ENCODE measurements at regions of chr17 and their contacts with region 1.

Region 1: DNA sequence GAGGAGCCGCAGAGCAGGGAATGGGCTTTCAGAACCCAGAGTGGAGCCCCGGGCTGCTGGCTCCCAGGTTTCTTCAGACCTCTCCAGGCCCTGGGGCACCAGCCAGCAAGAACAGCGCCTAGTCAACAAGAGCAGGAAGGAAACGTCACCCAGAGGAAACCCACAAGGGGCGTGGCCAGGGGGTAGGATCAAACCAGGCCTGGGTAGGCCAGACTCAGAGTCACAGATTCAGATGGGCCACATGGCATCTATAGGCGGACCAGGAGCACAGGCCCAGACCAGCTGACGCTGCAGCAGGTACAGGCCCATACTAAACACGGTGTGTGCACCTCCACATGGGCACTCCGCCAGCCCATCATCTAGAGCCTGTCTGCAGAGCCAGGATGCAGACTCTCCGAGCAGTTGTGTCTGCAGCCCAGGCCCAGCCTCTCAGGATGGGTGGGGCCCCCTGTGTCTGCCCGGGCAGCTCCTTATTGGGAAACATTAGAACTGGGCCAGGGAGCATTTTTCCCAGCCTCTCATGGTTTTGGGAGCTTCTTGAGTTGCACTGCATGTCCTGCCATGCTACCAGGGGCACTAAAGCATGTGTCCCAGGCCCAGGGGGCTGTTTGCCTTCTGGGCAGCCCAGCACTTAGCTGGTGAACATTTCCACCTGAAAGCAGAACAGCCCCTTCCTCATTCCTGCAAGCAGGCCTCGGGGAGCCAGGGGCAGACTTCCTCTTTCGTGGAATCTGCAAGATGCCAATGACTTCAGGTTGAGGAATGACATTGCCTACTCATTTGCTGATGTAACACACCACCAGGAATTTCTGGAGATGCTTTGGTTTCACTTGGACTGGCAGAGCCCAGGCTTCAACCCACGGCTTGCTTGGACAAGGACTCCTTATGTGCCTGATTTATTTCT is at the start of gene NLRP1:
- DNase-seq: no peak
- H3K4me3 ChIP-seq: no peak within 1 kb of the TSS
- H3K4me3 Mint-ChIP-seq: no peak within 1 kb of the TSS
- H3K27ac Mint-ChIP-seq: no peak within 1 kb of the TSS
- H3K4me1 ChIP-seq: no peaks in the 10 kb centered on the region
- H3K4me1 Mint-ChIP-seq: no peaks in the 10 kb centered on the region
- H3K27me3 ChIP-seq: no peaks in the 10 kb centered on the region
- H3K27me3 Mint-ChIP-seq: peaks cover 3% of the 10 kb centered on the region
- CTCF ChIP-seq: no peak
- total RNA-seq, gene NLRP1: 0.09 and 0.28 TPM in 2 replicates

Region 2: DNA sequence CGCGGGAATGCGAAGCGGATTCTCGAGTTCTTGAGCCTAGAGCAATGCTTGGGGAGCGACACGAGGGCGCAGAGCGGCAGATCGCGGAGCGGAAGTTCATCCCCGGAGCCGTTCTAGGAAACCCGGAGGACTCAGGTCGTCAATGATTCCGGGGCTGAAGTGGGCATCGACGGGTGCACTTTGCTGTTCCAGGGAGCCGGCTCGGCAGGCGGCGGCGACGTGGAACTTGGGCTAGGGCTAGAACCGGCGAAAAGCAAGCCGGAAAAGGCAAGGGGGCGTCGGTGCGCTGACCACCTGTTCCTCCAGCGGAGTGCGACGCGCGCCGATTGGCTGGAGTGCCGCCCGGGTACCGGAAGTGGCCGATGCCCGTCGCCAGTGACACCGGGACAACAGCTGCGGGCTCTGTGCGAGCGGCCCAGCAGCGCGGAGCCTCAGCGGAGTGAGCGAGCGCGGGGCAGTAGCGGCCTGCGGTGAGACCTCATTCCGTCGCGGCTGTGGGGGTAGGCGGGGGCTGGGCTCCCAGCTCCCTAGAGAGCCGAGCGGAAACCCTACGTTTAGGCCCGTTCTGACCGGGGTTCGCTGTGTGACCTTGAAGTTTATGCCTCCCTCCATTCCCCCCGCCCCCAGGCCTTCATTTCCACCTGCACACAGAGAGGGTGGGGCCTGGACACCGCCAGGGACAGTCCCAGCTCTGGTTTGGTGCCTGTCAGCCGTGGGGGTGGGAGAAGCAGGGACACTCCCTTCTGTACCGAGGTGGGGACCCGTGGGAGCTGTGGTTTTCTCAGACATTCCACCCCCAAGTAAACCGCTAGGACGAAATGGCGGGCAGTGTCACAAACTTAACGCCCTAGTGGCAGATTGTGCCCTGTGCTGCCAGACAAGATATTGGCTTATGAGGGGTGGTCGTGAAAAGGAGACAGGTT is 506.3 kb before region 1 on chr17 and contains the start of gene ZFP3:
- CTCF ChIA-PET with region 1: no interaction called
- POLR2A ChIA-PET with region 1: no interaction called
- intact Hi-C with region 1: no loop called
- DNase-seq: peak; percentile 81 to 85
- H3K4me3 ChIP-seq: peak within 1 kb of the TSS; percentile 74
- H3K4me3 Mint-ChIP-seq: peak within 1 kb of the TSS; percentile 93
- H3K27ac Mint-ChIP-seq: peak within 1 kb of the TSS; percentile 95
- H3K4me1 ChIP-seq: peaks cover 11% of the 10 kb centered on the region
- H3K4me1 Mint-ChIP-seq: no peaks in the 10 kb centered on the region
- H3K27me3 ChIP-seq: no peaks in the 10 kb centered on the region
- H3K27me3 Mint-ChIP-seq: no peaks in the 10 kb centered on the region
- CTCF ChIP-seq: peak in 1 of 2 experiments; percentile 13
- total RNA-seq, gene ZFP3: 3.6 and 3.7 TPM in 2 replicates

Region 3: GRCh38 chr17:5608399-5609112 is 23.9 kb after region 1 on chr17:
- CTCF ChIA-PET with region 1: no interaction called
- POLR2A ChIA-PET with region 1: no interaction called
- intact Hi-C with region 1: no loop called
- DNase-seq: no peak
- H3K4me3 ChIP-seq: no peak overlapping the region
- H3K4me3 Mint-ChIP-seq: no peak overlapping the region
- H3K27ac Mint-ChIP-seq: no peak overlapping the region
- H3K4me1 ChIP-seq: no peaks in the 10 kb centered on the region
- H3K4me1 Mint-ChIP-seq: no peaks in the 10 kb centered on the region
- H3K27me3 ChIP-seq: no peaks in the 10 kb centered on the region
- H3K27me3 Mint-ChIP-seq: peaks cover 4% of the 10 kb centered on the region
- CTCF ChIP-seq: no peak

Region 4: DNA sequence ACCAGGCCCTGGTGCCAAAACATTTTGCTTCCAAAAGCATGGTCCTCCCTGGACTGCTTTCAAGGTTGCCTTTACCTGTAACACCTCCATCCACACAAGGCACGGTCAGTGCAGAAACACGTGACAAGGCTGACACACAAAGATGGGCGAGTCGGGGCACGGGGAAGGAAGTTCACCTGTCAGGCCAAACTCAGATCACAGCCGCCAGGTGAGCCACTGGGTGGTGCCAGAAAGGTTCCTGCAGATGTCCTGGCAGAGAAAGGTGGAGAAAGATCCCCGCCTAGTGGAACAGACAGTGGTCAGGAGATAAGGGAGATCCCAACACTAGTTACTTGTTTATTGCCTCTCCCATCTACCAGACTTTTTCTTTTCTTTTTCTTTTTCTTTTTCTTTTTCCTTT is 695.0 kb after region 1 on chr17:
- CTCF ChIA-PET with region 1: no interaction called
- POLR2A ChIA-PET with region 1: no interaction called
- intact Hi-C with region 1: loop called (anchors 2 kb)
- DNase-seq: peak; percentile 46 to 49
- H3K4me3 ChIP-seq: no peak overlapping the region
- H3K4me3 Mint-ChIP-seq: no peak overlapping the region
- H3K27ac Mint-ChIP-seq: no peak overlapping the region
- H3K4me1 ChIP-seq: no peaks in the 10 kb centered on the region
- H3K4me1 Mint-ChIP-seq: no peaks in the 10 kb centered on the region
- H3K27me3 ChIP-seq: no peaks in the 10 kb centered on the region
- H3K27me3 Mint-ChIP-seq: peaks cover 9% of the 10 kb centered on the region
- CTCF ChIP-seq: peak; percentile 15 to 46

Region 5: GRCh38 chr17:6421700-6422604 is 837.3 kb after region 1 on chr17:
- CTCF ChIA-PET with region 1: no interaction called
- POLR2A ChIA-PET with region 1: no interaction called
- intact Hi-C with region 1: loop called (anchors 5 kb)
- DNase-seq: peak; percentile 68 to 71
- H3K4me3 ChIP-seq: no peak overlapping the region
- H3K4me3 Mint-ChIP-seq: no peak overlapping the region
- H3K27ac Mint-ChIP-seq: no peak overlapping the region
- H3K4me1 ChIP-seq: no peaks in the 10 kb centered on the region
- H3K4me1 Mint-ChIP-seq: no peaks in the 10 kb centered on the region
- H3K27me3 ChIP-seq: no peaks in the 10 kb centered on the region
- H3K27me3 Mint-ChIP-seq: no peaks in the 10 kb centered on the region
- CTCF ChIP-seq: peak; percentile 59 to 64

Measured in Caco-2 (cell line).